Psoas muscle (tissue), 8 donors: ENCODE measurements at regions of chr7 and their contacts with region 1.

Region 1: DNA sequence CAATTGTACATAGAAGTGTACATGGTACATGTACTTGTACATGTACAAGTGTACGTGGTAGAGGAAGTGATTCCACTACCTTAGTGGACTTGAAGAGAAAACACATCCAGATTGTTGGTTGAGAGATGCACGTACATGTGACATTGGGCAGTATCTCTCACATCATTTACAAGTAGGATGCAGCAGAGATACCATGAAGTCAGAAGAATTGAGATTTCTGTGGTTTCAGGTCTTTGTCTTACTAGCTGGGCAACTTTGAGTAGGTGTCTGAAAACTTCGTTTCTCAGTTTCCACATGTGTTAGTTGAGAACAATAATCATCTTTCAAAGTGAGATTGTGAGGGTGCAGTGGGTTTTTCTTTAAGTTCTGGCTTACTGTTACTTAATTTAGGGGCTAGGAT is 21.5 kb downstream of the CLDN12 start:
- DNase-seq: no peak
- ATAC-seq: no peak
- H3K4me3 ChIP-seq: no peak overlapping the region
- H3K27ac ChIP-seq: no peak overlapping the region
- H3K4me1 ChIP-seq: no peaks in the 10 kb centered on the region
- H3K27me3 ChIP-seq: no peaks in the 10 kb centered on the region
- CTCF ChIP-seq: no peak

Region 2: DNA sequence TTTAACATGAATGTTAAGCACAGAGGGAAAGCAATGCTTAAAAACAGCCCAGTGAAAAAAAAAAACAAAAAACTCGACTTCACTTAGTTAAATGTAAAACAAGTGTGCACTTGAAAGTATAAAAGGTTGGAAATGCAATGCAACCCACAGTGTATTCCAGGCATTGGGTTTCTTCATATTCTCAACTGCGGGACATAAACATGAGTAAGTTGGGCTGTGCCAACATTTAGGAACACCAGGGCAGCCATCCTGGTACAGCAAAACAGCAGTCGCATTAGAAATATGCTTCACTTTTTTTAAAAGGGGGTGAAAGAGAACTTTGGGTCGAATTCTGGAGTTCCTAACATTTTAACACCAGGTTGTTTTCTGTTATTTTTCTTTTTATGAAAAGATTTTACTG is 269.5 kb before region 1 on chr7:
- intact Hi-C with region 1: loop called (anchors 2 to 5 kb)
- DNase-seq: no peak
- ATAC-seq: no peak
- H3K4me3 ChIP-seq: no peak overlapping the region
- H3K27ac ChIP-seq: no peak overlapping the region
- H3K4me1 ChIP-seq: no peaks in the 10 kb centered on the region
- H3K27me3 ChIP-seq: no peaks in the 10 kb centered on the region
- CTCF ChIP-seq: no peak

Region 3: DNA sequence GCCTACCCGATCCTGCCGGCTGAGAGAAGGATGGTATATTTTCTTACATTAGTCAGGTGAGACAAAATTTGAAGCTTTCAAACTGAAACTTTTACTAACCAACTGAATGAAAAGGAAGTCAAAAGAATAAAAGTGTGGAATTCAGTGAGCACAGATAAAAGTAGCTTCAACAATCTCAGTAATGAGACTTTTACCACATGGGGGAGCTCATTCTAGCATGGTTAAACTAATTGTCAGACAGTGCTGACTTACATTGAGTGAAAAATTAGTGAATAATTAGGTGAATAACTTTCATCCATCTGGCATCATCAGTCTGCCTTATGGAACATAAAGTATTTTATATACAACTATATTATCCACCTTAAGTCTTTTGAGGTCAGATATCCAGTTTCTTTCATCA is 112.0 kb before region 1 on chr7:
- intact Hi-C with region 1: loop called (anchors 2 to 5 kb)
- DNase-seq: no peak
- ATAC-seq: no peak
- H3K4me3 ChIP-seq: no peak overlapping the region
- H3K27ac ChIP-seq: no peak overlapping the region
- H3K4me1 ChIP-seq: no peaks in the 10 kb centered on the region
- H3K27me3 ChIP-seq: peaks cover 0 to 3% (median 0%) of the 10 kb centered on the region in 3 donors
- CTCF ChIP-seq: no peak

Region 4: GRCh38 chr7:91013078-91013477 is 588.4 kb after region 1 on chr7:
- intact Hi-C with region 1: no loop called
- DNase-seq: no peak
- ATAC-seq: no peak
- H3K4me3 ChIP-seq: no peak overlapping the region
- H3K27ac ChIP-seq: no peak overlapping the region
- H3K4me1 ChIP-seq: no peaks in the 10 kb centered on the region
- H3K27me3 ChIP-seq: no peaks in the 10 kb centered on the region
- CTCF ChIP-seq: no peak